WTC11 (cell line): ENCODE measurements at regions of chr1 and their contacts with region 1.

Region 1: GRCh38 chr1:44812822-44813543 is 4.7 kb downstream of the BTBD19 start:
- DNase-seq: peak; percentile 53
- ATAC-seq: peak; percentile 31
- H3K4me3 Mint-ChIP-seq: peak overlapping the region; percentile 79
- H3K27ac Mint-ChIP-seq: no peak overlapping the region
- H3K4me1 Mint-ChIP-seq: peaks cover 29% of the 10 kb centered on the region
- H3K27me3 Mint-ChIP-seq: peaks cover 7% of the 10 kb centered on the region
- CTCF ChIP-seq: no peak

Region 2: GRCh38 chr1:44696789-44697345 is 116.1 kb before region 1 on chr1:
- CTCF ChIA-PET with region 1: no interaction called
- POLR2A ChIA-PET with region 1: no interaction called
- DNase-seq: no peak
- ATAC-seq: no peak
- H3K4me3 Mint-ChIP-seq: no peak overlapping the region
- H3K27ac Mint-ChIP-seq: no peak overlapping the region
- H3K4me1 Mint-ChIP-seq: no peaks in the 10 kb centered on the region
- H3K27me3 Mint-ChIP-seq: peaks cover 3% of the 10 kb centered on the region; the same call in 1 of the 2 replicates
- CTCF ChIP-seq: no peak

Region 3: GRCh38 chr1:44775078-44775929 is 37.7 kb before region 1 on chr1 and contains the start of gene RPS8:
- CTCF ChIA-PET with region 1: interaction called, 5 read pairs
- POLR2A ChIA-PET with region 1: interaction called, 16 read pairs
- DNase-seq: peak; percentile 93
- ATAC-seq: peak; percentile 88
- H3K4me3 Mint-ChIP-seq: peak within 1 kb of the TSS; percentile 87
- H3K27ac Mint-ChIP-seq: peak within 1 kb of the TSS; percentile 97
- H3K4me1 Mint-ChIP-seq: peaks cover 22% of the 10 kb centered on the region
- H3K27me3 Mint-ChIP-seq: no peaks in the 10 kb centered on the region
- CTCF ChIP-seq: no peak
- total RNA-seq, gene RPS8: 2,343 to 2,726 TPM (median 2,722 TPM) in 3 replicates

Region 4: GRCh38 chr1:44792783-44793714 is 19.9 kb before region 1 on chr1:
- CTCF ChIA-PET with region 1: interaction called, 26 read pairs
- POLR2A ChIA-PET with region 1: interaction called, 43 read pairs
- DNase-seq: no peak
- ATAC-seq: peak; percentile 2; the same call in 1 of the 2 replicates
- H3K4me3 Mint-ChIP-seq: peak overlapping the region; percentile 20
- H3K27ac Mint-ChIP-seq: peak overlapping the region; percentile 79
- H3K4me1 Mint-ChIP-seq: peaks cover 15% of the 10 kb centered on the region
- H3K27me3 Mint-ChIP-seq: no peaks in the 10 kb centered on the region
- CTCF ChIP-seq: no peak

Region 5: GRCh38 chr1:44835738-44836675 is 23.0 kb after region 1 on chr1:
- CTCF ChIA-PET with region 1: interaction called, 13 read pairs
- POLR2A ChIA-PET with region 1: no interaction called
- DNase-seq: peak; percentile 95
- ATAC-seq: peak; percentile 90
- H3K4me3 Mint-ChIP-seq: no peak overlapping the region
- H3K27ac Mint-ChIP-seq: peak overlapping the region; percentile 28; the same call in 1 of the 2 replicates
- H3K4me1 Mint-ChIP-seq: peaks cover 16% of the 10 kb centered on the region
- H3K27me3 Mint-ChIP-seq: no peaks in the 10 kb centered on the region; the same call in 1 of the 2 replicates
- CTCF ChIP-seq: peak; percentile 80

Region 6: GRCh38 chr1:44851308-44851707 is 38.3 kb after region 1 on chr1:
- CTCF ChIA-PET with region 1: no interaction called
- POLR2A ChIA-PET with region 1: no interaction called
- DNase-seq: no peak
- ATAC-seq: no peak
- H3K4me3 Mint-ChIP-seq: no peak overlapping the region
- H3K27ac Mint-ChIP-seq: no peak overlapping the region; the same call in 1 of the 2 replicates
- H3K4me1 Mint-ChIP-seq: peaks cover 12% of the 10 kb centered on the region
- H3K27me3 Mint-ChIP-seq: no peaks in the 10 kb centered on the region
- CTCF ChIP-seq: no peak